ENCODE measurements at regions of chr14 and their contacts with region 1.

Region 1: DNA sequence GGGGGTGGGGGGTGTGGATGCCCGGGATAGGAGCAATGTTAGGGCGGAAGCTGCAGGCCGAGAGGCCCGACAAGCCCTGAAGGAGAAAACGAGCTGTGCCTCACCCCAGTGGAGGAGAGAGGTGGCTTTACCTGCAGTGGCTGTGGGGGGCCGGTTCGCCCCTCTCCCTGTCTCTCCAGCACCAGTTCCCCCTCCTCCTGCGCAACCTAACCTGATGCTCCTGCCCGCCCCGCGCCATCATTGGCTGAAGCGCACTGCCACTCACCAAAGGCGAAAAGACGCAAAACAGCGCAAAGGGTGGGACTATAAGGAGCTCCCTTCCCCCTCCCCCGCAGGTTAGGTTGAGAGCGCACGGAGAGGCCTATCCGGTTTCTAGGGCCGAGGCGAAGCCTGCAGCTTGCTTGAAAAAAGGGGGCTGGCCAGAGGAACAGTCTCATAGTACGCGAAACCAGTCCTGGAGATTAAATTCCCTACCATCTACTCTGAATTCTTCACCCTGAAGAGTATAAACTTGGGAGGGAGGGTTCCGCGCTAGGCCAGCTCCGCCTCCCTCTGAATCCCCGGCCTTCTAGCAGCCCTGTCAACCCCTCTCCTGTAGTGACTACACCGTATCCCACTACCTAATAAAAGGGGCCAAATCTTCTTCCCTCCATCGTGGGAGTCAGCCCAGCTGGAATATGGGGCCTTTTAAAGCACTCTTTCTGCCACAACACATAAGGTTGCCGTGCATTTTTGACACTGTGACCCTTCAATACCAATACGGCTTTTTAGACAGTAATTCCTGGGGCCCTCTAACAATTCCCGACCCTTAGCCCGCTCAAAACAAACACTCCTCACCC is 18.6 kb downstream of the CHD8 start:
- DNase-seq: peak; percentile 94
- ATAC-seq: peak; percentile 99
- H3K4me3 ChIP-seq: peak overlapping the region; percentile 78
- H3K27ac ChIP-seq: peak overlapping the region; percentile 79
- H3K4me1 ChIP-seq: peaks cover 2% of the 10 kb centered on the region; the same call in 1 of the 2 replicates
- H3K27me3 ChIP-seq: no peaks in the 10 kb centered on the region
- CTCF ChIP-seq: no peak
- EP300 ChIP-seq: no peak
- POLR2A ChIP-seq: peak; percentile 90
- RAD21 ChIP-seq: no peak

Region 2: DNA sequence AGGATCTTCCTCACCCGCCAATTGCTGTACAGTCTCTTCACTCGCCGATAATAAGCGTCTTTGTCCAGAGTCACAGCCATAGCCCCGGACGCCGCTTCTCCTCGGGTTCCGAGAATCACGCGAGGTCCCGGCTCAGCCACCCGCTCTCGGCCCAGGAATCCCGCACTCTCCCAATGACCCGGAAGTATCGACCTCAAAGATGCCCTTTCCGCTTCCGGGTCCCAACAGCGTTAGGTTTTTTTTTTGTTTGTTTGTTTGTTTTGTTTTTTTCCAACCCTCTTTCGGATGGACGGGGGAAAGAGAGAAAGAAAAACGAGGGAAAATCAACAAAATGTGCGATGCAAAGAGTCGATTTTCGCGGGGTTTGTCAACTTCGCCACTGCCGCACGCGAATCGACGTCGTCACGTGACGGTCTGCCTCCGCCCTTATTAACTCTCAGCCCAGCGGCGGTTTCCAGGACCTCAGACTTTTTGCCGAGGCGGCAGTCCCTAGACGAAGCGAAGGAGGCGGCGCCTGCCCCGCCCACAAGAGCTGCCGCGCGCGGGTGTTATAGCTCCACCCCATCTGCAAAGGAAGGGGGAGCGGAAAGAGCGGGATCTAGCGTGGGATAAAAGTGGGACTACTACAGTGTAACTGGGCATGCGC is 53.3 kb before region 1 on chr14 and contains the start of gene SUPT16H:
- CTCF ChIA-PET with region 1: no interaction called
- POLR2A ChIA-PET with region 1: interaction called, 3 read pairs
- RAD21 ChIA-PET with region 1: interaction called, 5 read pairs
- SMC1A ChIA-PET with region 1: interaction called, 4 read pairs
- in situ Hi-C with region 1: no loop called
- intact Hi-C with region 1: loop called (anchors 5 kb)
- DNase-seq: peak; percentile 71
- ATAC-seq: peak; percentile 91
- H3K4me3 ChIP-seq: peak within 1 kb of the TSS; percentile 95
- H3K27ac ChIP-seq: peak within 1 kb of the TSS; percentile 94
- H3K4me1 ChIP-seq: peaks cover 9% of the 10 kb centered on the region
- H3K27me3 ChIP-seq: no peaks in the 10 kb centered on the region
- CTCF ChIP-seq: no peak
- EP300 ChIP-seq: no peak
- POLR2A ChIP-seq: peak; percentile 64
- RAD21 ChIP-seq: no peak
- polyA plus RNA-seq, gene SUPT16H: 90.7 to 106 TPM

Region 3: DNA sequence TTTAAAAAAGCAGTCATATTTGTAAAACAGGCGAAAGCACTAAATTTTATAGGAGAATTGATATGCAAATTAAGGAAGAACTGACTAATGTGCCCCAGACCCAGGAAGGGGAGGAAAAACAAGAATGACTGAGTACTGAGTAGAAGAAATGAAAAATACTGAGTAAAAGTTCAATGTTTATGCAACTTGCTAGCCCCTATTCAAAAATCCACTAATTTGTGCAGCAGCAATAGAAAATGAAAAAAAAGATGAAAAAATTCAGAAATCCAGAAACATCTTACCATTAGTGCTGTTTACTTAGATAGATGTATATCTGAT is 12.6 kb after region 1 on chr14:
- CTCF ChIA-PET with region 1: interaction called, 38 read pairs
- POLR2A ChIA-PET with region 1: interaction called, 82 read pairs
- RAD21 ChIA-PET with region 1: interaction called, 46 read pairs
- SMC1A ChIA-PET with region 1: interaction called, 23 read pairs
- in situ Hi-C with region 1: no loop called
- intact Hi-C with region 1: no loop called
- DNase-seq: no peak
- ATAC-seq: no peak; the same call in 2 of the 3 replicates
- H3K4me3 ChIP-seq: peak overlapping the region; percentile 41; the same call in 1 of the 2 replicates
- H3K27ac ChIP-seq: peak overlapping the region; percentile 62; the same call in 1 of the 2 replicates
- H3K4me1 ChIP-seq: peaks cover 12% of the 10 kb centered on the region
- H3K27me3 ChIP-seq: no peaks in the 10 kb centered on the region
- CTCF ChIP-seq: no peak
- EP300 ChIP-seq: no peak
- POLR2A ChIP-seq: no peak
- RAD21 ChIP-seq: no peak

Region 4: GRCh38 chr14:21476925-21477681 is 39.8 kb after region 1 on chr14 and contains the starts of genes RAB2B and TOX4:
- CTCF ChIA-PET with region 1: interaction called, 3 read pairs
- POLR2A ChIA-PET with region 1: interaction called, 6 read pairs
- RAD21 ChIA-PET with region 1: no interaction called
- SMC1A ChIA-PET with region 1: interaction called, 8 read pairs
- in situ Hi-C with region 1: no loop called
- intact Hi-C with region 1: loop called (anchors 1 kb)
- DNase-seq: peak; percentile 94
- ATAC-seq: peak; percentile 98
- H3K4me3 ChIP-seq: peak within 1 kb of the TSS; percentile 99
- H3K27ac ChIP-seq: peak within 1 kb of the TSS; percentile 77
- H3K4me1 ChIP-seq: peaks cover 5% of the 10 kb centered on the region
- H3K27me3 ChIP-seq: no peaks in the 10 kb centered on the region
- CTCF ChIP-seq: peak; percentile 98 to 99 (median 99)
- EP300 ChIP-seq: peak in 1 of 2 experiments; percentile 46; a peak in 1 of 4 replicates
- POLR2A ChIP-seq: peak; percentile 91
- RAD21 ChIP-seq: peak; percentile 40; the same call in 1 of the 2 replicates
- polyA plus RNA-seq, gene RAB2B: 5.6 to 9.8 TPM
- polyA plus RNA-seq, gene TOX4: 54.7 to 55.5 TPM

Region 5: GRCh38 chr14:21575661-21576060 is 138.4 kb after region 1 on chr14:
- CTCF ChIA-PET with region 1: no interaction called
- POLR2A ChIA-PET with region 1: no interaction called
- RAD21 ChIA-PET with region 1: no interaction called
- SMC1A ChIA-PET with region 1: no interaction called
- in situ Hi-C with region 1: no loop called
- intact Hi-C with region 1: no loop called
- DNase-seq: no peak
- ATAC-seq: no peak
- H3K4me3 ChIP-seq: no peak overlapping the region
- H3K27ac ChIP-seq: no peak overlapping the region
- H3K4me1 ChIP-seq: no peaks in the 10 kb centered on the region
- H3K27me3 ChIP-seq: no peaks in the 10 kb centered on the region
- CTCF ChIP-seq: no peak
- EP300 ChIP-seq: no peak
- POLR2A ChIP-seq: no peak
- RAD21 ChIP-seq: no peak

Measured in GM12878 (cell line).